PC-3 (cell line): ENCODE measurements at regions of chr13 and their contacts with region 1.

Region 1: GRCh38 chr13:32340914-32341313 is 25.6 kb downstream of the BRCA2 start:
- DNase-seq: no peak
- ATAC-seq: no peak
- H3K4me3 ChIP-seq: no peak overlapping the region
- H3K27ac ChIP-seq: no peak overlapping the region
- H3K4me1 ChIP-seq: no peaks in the 10 kb centered on the region
- H3K27me3 ChIP-seq: no peaks in the 10 kb centered on the region
- CTCF ChIP-seq: no peak

Region 2: DNA sequence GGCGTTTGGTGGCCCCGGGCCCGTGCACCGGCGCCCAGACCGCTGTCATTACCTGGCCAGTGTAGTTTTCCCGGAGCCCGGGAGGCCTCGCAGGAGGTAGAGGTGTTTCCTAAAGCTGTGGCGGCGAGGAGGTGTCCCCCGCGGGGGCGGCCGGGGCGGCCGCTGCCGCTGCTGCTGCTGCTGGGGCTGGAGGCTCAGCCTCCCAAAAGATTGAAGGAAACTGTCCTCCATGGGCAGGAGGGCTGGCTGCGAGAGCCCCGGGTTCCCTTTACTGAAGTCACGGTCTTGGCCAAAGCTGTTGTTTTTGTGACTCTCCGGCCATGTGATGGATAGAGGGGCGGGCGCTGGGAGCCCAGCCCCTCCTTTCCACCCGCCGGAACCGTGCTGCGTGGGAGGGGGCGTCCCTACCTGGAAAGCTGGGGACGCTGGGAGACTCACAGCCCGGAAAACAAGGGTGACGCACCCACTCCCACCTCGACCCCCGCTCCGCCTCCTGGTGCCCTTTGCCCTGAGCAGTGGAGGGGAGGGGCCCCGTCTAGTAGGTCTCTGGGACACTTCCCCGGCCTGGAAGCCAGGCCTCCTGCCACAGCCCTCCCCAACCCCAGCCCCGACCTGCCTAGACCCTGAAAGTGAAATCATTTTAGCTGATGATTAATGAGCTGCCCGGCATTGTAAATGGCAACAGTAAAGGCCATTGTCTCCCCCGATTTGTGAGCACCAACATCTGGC is 87.1 kb after region 1 on chr13 and contains the start of gene N4BP2L1:
- CTCF ChIA-PET with region 1: no interaction called
- POLR2A ChIA-PET with region 1: interaction called, 12 read pairs
- intact Hi-C with region 1: no loop called
- DNase-seq: peak; percentile 32
- ATAC-seq: peak; percentile 70
- H3K4me3 ChIP-seq: peak within 1 kb of the TSS; percentile 80
- H3K27ac ChIP-seq: no peak within 1 kb of the TSS
- H3K4me1 ChIP-seq: peaks cover 8% of the 10 kb centered on the region; the same call in 1 of the 2 replicates
- H3K27me3 ChIP-seq: no peaks in the 10 kb centered on the region
- CTCF ChIP-seq: no peak
- total RNA-seq, gene N4BP2L1: 0.15 and 0.17 TPM in 2 replicates